ENCODE measurements at regions of chr1 and their contacts with region 1.

Region 1: DNA sequence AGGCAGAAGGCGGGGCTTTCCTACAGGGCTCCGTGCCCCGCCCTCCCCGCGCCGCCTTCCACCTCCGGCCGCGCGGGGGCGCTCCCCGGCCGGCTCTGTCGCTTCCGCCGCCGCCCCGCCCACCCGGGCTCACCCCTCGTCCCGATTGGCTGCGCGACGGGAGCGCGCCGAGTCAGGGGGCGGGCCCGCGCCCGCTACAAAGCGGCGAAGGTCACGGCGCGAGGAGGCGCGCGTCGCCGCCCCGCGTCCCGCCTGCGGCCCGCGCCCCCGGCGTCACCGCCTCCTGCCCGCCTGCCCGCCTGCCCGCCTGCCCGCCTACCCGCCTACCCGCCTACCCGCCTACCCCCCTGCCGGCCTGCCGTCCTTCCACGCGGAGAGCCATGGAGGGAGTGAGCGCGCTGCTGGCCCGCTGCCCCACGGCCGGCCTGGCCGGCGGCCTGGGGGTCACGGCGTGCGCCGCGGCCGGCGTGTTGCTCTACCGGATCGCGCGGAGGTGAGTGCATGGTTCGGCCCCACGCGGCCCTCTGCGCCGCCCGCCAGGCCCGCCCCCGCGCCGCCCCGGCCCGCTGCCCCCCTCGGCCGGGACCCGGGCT is at the start of gene TMEM201:
- DNase-seq: peak; percentile 94 to 97 (median 95)
- ATAC-seq: peak; percentile 66 to 92 (median 86)
- H3K4me3 ChIP-seq: peak within 1 kb of the TSS; percentile 64 to 90 (median 78)
- H3K27ac ChIP-seq: peak within 1 kb of the TSS in 11 of 12 donors; percentile 23 to 86 (median 60)
- H3K4me1 ChIP-seq: peaks cover 0 to 54% (median 44%) of the 10 kb centered on the region in 12 donors
- H3K27me3 ChIP-seq: no peaks in the 10 kb centered on the region
- CTCF ChIP-seq: peak; percentile 61 to 98 (median 92)
- POLR2A ChIP-seq: peak in 1 of 2 donors; percentile 35
- total RNA-seq, gene TMEM201: 16.0 to 24.8 (median 18.5) TPM

Region 2: GRCh38 chr1:9486466-9487140 is 102.0 kb before region 1 on chr1:
- intact Hi-C with region 1: no loop called
- DNase-seq: no peak
- ATAC-seq: no peak
- H3K4me3 ChIP-seq: no peak overlapping the region
- H3K27ac ChIP-seq: peak overlapping the region in 2 of 12 donors; percentile 4 to 50
- H3K4me1 ChIP-seq: peaks cover 0 to 3% (median 0%) of the 10 kb centered on the region in 12 donors
- H3K27me3 ChIP-seq: no peaks in the 10 kb centered on the region
- CTCF ChIP-seq: no peak
- POLR2A ChIP-seq: no peak

Region 3: GRCh38 chr1:9539165-9539828 is 49.4 kb before region 1 on chr1 and contains the start of gene SLC25A33:
- intact Hi-C with region 1: loop called in 1 of 10 experiments (anchors 2 kb)
- DNase-seq: peak; percentile 97 to 99 (median 97)
- ATAC-seq: peak; percentile 99 to 100 (median 100)
- H3K4me3 ChIP-seq: peak within 1 kb of the TSS; percentile 70 to 94 (median 80)
- H3K27ac ChIP-seq: peak within 1 kb of the TSS; percentile 43 to 95 (median 86)
- H3K4me1 ChIP-seq: peaks cover 0 to 37% (median 22%) of the 10 kb centered on the region in 12 donors
- H3K27me3 ChIP-seq: no peaks in the 10 kb centered on the region
- CTCF ChIP-seq: peak in 3 of 12 donors; percentile 7 to 19 (median 9)
- POLR2A ChIP-seq: peak; percentile 82 to 84
- total RNA-seq, gene SLC25A33: 2.8 to 9.7 (median 4.5) TPM

Region 4: GRCh38 chr1:9555942-9556341 is 32.7 kb before region 1 on chr1:
- intact Hi-C with region 1: loop called in 2 of 10 experiments (anchors 1 kb)
- DNase-seq: no peak
- ATAC-seq: peak in 3 of 4 donors; percentile 27 to 44 (median 40)
- H3K4me3 ChIP-seq: peak overlapping the region in 4 of 12 donors; percentile 11 to 42 (median 24)
- H3K27ac ChIP-seq: peak overlapping the region; percentile 69 to 94 (median 82)
- H3K4me1 ChIP-seq: peaks cover 0 to 45% (median 21%) of the 10 kb centered on the region in 12 donors
- H3K27me3 ChIP-seq: no peaks in the 10 kb centered on the region
- CTCF ChIP-seq: no peak
- POLR2A ChIP-seq: no peak